PC-3 (cell line): ENCODE measurements at regions of chr12 and their contacts with region 1.

Region 1: GRCh38 chr12:120799243-120800045 is 73.8 kb downstream of the ACADS start:
- DNase-seq: no peak
- ATAC-seq: no peak
- H3K4me3 ChIP-seq: no peak overlapping the region
- H3K27ac ChIP-seq: no peak overlapping the region
- H3K4me1 ChIP-seq: 0 out of 2 replicates have a peak, but pooled peaks cover 3% of the 10 kb centered on the region
- H3K27me3 ChIP-seq: no peaks in the 10 kb centered on the region
- CTCF ChIP-seq: no peak

Region 2: DNA sequence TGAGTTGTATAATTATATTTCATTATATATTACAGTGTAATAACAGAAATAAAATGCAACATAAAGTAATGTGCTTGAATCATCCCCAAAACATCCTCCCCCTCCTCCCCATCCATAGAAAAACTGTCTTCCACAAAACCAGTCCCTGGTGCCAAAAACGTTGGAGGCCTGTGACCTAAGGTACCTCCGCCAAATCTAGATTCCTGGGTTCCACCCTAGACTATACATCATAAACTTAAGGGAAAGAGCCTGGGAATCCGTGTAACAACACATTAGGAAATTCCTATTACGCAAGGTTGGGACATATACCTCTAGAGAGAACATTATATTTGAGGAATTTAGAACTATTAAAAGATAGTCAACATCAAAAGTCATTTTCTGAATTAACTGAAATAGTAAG is 66.7 kb after region 1 on chr12:
- CTCF ChIA-PET with region 1: no interaction called
- POLR2A ChIA-PET with region 1: no interaction called
- intact Hi-C with region 1: no loop called
- DNase-seq: no peak
- ATAC-seq: no peak
- H3K4me3 ChIP-seq: no peak overlapping the region
- H3K27ac ChIP-seq: no peak overlapping the region
- H3K4me1 ChIP-seq: peaks cover 8% of the 10 kb centered on the region
- H3K27me3 ChIP-seq: no peaks in the 10 kb centered on the region
- CTCF ChIP-seq: no peak

Region 3: DNA sequence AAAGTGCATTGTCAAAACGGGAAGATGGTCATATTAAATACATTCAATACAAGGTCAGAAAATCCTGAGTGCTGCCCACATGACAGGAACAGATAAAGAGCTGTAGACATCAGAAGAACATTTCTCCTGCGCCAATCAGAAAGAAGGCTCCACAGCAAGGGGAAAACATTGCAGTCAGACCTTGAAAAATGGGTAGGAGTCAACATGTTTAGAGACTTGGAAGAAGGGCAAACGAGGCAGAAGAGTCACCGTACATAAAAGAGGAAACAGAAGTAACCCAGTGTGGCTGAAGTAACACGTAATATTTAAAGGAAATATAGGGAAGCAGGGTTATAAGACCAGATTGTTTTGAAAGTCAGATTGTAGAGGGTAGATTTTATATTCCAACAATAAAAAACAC is 92.8 kb after region 1 on chr12:
- CTCF ChIA-PET with region 1: no interaction called
- POLR2A ChIA-PET with region 1: no interaction called
- intact Hi-C with region 1: loop called (anchors 5 kb)
- DNase-seq: no peak
- ATAC-seq: no peak
- H3K4me3 ChIP-seq: no peak overlapping the region
- H3K27ac ChIP-seq: no peak overlapping the region
- H3K4me1 ChIP-seq: no peaks in the 10 kb centered on the region
- H3K27me3 ChIP-seq: no peaks in the 10 kb centered on the region
- CTCF ChIP-seq: no peak